A549 (cell line): ENCODE measurements at regions of chr9 and their contacts with region 1.

Region 1: GRCh38 chr9:130235897-130236668 is 29.5 kb upstream of the HMCN2 start:
- DNase-seq: peak; percentile 47 to 48
- ATAC-seq: peak in 1 of 2 experiments; percentile 67; a peak in 3 of 6 replicates
- H3K4me3 ChIP-seq: no peak overlapping the region
- H3K27ac ChIP-seq: no peak overlapping the region
- H3K4me1 ChIP-seq: peaks cover 12% of the 10 kb centered on the region; the same call in 2 of the 3 replicates
- CTCF ChIP-seq: peak; percentile 92
- EP300 ChIP-seq: no peak
- POLR2A ChIP-seq: no peak
- RAD21 ChIP-seq: peak; percentile 79 to 85

Region 2: DNA sequence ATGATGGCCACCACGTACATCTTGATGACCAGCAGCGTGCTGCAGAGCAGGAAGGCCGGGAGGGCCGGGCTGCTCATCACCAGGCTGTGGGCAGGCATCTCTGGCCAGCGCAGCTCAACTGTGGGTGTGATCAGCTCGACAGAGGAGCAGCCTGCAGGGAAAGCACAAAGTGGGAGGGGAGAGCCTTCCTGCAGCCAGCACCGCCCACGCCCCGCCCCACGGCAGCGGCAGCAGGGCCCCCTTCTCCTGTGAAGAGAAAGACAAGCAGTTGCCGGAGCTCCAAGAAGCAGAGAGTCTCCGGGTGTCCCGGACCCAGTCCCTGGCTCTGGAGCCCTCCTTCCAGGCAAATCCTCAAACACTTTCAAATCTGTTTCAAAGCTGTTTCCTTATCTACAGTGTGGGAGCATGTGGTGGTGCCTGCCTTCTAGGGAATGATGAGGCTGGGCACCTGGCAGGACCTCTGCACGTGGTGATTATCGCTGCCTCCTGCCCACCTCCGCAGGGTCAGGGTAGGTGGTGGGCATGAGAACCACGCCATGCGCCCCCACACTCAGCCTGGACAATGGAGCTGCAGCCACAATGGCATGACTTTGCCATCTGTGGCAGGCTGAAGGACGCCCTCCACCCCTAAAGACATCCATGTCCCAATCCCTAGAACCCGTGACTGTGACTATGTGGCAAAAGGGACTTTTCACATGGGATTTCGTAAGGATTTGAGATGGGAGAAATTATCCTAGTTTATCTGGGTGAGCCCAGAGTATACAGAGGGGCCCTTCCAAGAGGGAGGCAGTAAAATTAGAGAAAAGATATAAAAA is 483.0 kb before region 1 on chr9 and contains the start of gene PTGES:
- CTCF ChIA-PET with region 1: no interaction called
- POLR2A ChIA-PET with region 1: no interaction called
- DNase-seq: peak; percentile 79 to 91
- ATAC-seq: peak; percentile 93 to 97
- H3K4me3 ChIP-seq: peak within 1 kb of the TSS; percentile 51
- H3K27ac ChIP-seq: peak within 1 kb of the TSS; percentile 64 to 78
- H3K4me1 ChIP-seq: peaks cover 47% of the 10 kb centered on the region
- CTCF ChIP-seq: no peak
- EP300 ChIP-seq: no peak
- POLR2A ChIP-seq: peak; percentile 51
- RAD21 ChIP-seq: no peak
- polyA plus RNA-seq, gene PTGES: 19.1 and 22.1 TPM in 2 replicates

Region 3: GRCh38 chr9:130220352-130220751 is 15.7 kb before region 1 on chr9:
- CTCF ChIA-PET with region 1: interaction called, 27 read pairs
- POLR2A ChIA-PET with region 1: no interaction called
- DNase-seq: no peak
- ATAC-seq: peak in 1 of 2 experiments; percentile 20; a peak in 1 of 6 replicates
- H3K4me3 ChIP-seq: no peak overlapping the region
- H3K27ac ChIP-seq: no peak overlapping the region
- H3K4me1 ChIP-seq: no peaks in the 10 kb centered on the region
- CTCF ChIP-seq: no peak
- EP300 ChIP-seq: no peak
- POLR2A ChIP-seq: no peak
- RAD21 ChIP-seq: no peak

Region 4: DNA sequence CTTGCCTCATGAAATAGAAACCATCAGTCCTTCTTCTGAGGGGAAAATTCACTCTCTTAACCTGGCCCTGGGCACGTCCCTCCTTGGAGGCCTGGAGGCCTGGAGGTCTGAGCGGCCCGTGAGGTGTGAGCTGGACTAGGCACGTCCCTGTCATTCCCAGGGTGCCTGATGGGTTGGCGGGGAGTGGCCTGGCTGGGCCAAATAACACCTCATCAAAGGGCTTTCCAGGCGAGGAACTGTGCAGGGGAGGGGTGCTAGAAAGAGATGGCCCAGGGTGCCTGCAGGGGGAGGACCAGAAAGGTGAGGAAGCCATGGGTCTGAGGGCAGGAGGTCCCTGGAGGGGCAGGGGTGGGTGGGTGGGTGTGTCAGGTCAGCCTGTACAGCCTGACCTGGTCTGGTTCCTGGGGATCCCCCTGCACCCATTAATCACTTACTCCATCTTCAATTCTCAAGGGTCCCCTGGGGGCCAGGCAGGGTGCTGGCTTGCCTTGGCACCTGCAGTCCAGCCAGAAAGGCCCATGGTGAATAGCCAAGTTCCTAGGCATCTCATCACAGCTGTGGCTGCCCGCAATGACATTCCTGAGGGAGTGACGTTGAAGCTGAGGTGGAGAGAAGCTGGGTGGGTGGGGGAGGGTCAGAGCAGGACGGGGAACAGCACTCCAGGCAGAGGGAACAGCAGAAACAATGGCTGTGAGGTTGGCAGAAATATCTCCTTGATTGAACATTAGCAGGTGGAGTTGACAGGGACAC is 39.9 kb after region 1 on chr9:
- CTCF ChIA-PET with region 1: no interaction called
- POLR2A ChIA-PET with region 1: no interaction called
- DNase-seq: no peak
- ATAC-seq: no peak
- H3K4me3 ChIP-seq: no peak overlapping the region
- H3K27ac ChIP-seq: no peak overlapping the region
- H3K4me1 ChIP-seq: no peaks in the 10 kb centered on the region
- CTCF ChIP-seq: no peak
- EP300 ChIP-seq: no peak
- POLR2A ChIP-seq: no peak
- RAD21 ChIP-seq: no peak